MCF 10A (cell line): ENCODE measurements at regions of chr7 and their contacts with region 1.

Region 1: GRCh38 chr7:139731802-139732470 is 45.9 kb downstream of the HIPK2 start:
- DNase-seq: peak; percentile 98
- H3K4me3 Mint-ChIP-seq: peak overlapping the region; percentile 57
- H3K27ac Mint-ChIP-seq: peak overlapping the region; percentile 87
- H3K4me1 Mint-ChIP-seq: peaks cover 73% of the 10 kb centered on the region
- H3K27me3 Mint-ChIP-seq: no peaks in the 10 kb centered on the region
- CTCF ChIP-seq: no peak

Region 2: DNA sequence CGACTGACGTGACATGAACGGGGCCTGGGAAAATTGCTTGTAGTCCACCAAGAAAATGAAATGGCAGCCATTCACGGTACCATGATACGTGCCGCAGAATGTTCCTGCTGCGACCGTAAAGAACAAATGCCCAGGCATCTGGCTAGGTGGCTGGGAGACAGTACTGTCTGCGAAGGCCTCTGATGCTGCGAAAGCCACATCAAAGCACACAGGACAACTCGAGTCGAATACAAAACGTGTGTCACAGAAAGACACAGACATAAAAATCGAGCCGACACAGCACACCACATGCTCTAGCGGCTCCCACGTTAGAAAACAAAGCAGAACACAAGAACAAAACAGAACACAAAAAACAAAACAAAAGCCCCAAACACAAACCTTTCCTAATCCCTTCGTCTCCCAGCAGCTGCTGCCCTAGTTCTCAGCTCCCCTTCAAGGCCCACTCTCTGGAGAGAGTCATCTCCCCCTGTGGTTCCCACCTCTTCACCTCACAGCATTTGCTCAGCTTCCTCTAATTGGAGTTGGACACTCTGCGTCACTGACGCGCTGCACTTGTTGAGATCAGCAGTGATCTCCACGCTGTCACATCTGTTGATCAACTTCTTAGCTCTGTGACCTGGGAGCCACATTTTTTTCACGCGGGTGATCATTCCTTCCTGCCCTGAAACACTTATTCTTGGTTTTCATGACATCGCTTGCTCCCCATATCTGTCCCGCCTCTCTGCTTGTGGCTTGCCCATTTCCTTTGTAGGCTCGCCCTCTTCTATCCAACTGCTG is 96.2 kb before region 1 on chr7:
- CTCF ChIA-PET with region 1: no interaction called
- POLR2A ChIA-PET with region 1: no interaction called
- intact Hi-C with region 1: no loop called
- DNase-seq: no peak
- H3K4me3 Mint-ChIP-seq: no peak overlapping the region
- H3K27ac Mint-ChIP-seq: peak overlapping the region; percentile 1
- H3K4me1 Mint-ChIP-seq: peaks cover 5% of the 10 kb centered on the region
- H3K27me3 Mint-ChIP-seq: no peaks in the 10 kb centered on the region
- CTCF ChIP-seq: no peak

Region 3: GRCh38 chr7:139673230-139673629 is 58.7 kb before region 1 on chr7:
- CTCF ChIA-PET with region 1: no interaction called
- POLR2A ChIA-PET with region 1: interaction called, 19 read pairs
- intact Hi-C with region 1: no loop called
- DNase-seq: peak; percentile 23
- H3K4me3 Mint-ChIP-seq: no peak overlapping the region
- H3K27ac Mint-ChIP-seq: peak overlapping the region; percentile 85
- H3K4me1 Mint-ChIP-seq: peaks cover 34% of the 10 kb centered on the region
- H3K27me3 Mint-ChIP-seq: no peaks in the 10 kb centered on the region
- CTCF ChIP-seq: no peak

Region 4: GRCh38 chr7:139680676-139681462 is 51.1 kb before region 1 on chr7:
- CTCF ChIA-PET with region 1: interaction called, 3 read pairs
- POLR2A ChIA-PET with region 1: interaction called, 12 read pairs
- intact Hi-C with region 1: loop called (anchors 2 kb)
- DNase-seq: peak; percentile 95
- H3K4me3 Mint-ChIP-seq: peak overlapping the region; percentile 13
- H3K27ac Mint-ChIP-seq: peak overlapping the region; percentile 94
- H3K4me1 Mint-ChIP-seq: peaks cover 54% of the 10 kb centered on the region
- H3K27me3 Mint-ChIP-seq: no peaks in the 10 kb centered on the region
- CTCF ChIP-seq: no peak

Region 5: GRCh38 chr7:139758388-139758787 is 26.5 kb after region 1 on chr7:
- CTCF ChIA-PET with region 1: interaction called, 3 read pairs
- POLR2A ChIA-PET with region 1: interaction called, 11 read pairs
- intact Hi-C with region 1: no loop called
- DNase-seq: peak; percentile 59
- H3K4me3 Mint-ChIP-seq: no peak overlapping the region
- H3K27ac Mint-ChIP-seq: no peak overlapping the region
- H3K4me1 Mint-ChIP-seq: peaks cover 68% of the 10 kb centered on the region
- H3K27me3 Mint-ChIP-seq: no peaks in the 10 kb centered on the region
- CTCF ChIP-seq: no peak